AG04449 (cell line): ENCODE measurements at regions of chr17 and their contacts with region 1.

Region 1: DNA sequence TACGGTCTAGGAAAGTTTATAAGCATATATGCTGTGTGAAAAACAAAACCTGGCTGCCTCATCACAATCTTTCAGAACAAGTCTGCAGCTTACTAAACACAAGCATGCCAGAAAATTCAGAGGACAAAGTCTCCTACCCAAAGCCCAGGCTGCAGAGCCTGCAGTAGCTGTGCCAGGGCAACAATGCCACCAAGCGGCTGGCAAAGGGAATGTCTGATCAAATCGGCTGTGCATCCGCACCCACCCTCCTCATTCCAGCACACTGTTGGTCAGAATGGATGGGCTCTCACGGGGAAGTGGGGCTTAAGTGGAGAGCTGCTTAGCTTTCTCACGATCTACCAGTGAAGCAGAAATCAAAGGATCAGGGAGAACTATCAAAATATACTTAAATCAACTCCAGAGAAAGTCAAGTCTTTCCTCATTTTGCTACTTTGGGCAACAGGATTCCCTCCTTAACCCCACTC is 73.5 kb downstream of the CYTH1 start:
- DNase-seq: peak; percentile 57
- H3K4me3 ChIP-seq: no peak overlapping the region
- CTCF ChIP-seq: peak; percentile 95

Region 2: GRCh38 chr17:78484300-78485246 is 224.0 kb before region 1 on chr17:
- CTCF ChIA-PET with region 1: interaction called, 14 read pairs
- POLR2A ChIA-PET with region 1: no interaction called
- DNase-seq: no peak
- H3K4me3 ChIP-seq: peak overlapping the region; percentile 33
- CTCF ChIP-seq: no peak

Region 3: DNA sequence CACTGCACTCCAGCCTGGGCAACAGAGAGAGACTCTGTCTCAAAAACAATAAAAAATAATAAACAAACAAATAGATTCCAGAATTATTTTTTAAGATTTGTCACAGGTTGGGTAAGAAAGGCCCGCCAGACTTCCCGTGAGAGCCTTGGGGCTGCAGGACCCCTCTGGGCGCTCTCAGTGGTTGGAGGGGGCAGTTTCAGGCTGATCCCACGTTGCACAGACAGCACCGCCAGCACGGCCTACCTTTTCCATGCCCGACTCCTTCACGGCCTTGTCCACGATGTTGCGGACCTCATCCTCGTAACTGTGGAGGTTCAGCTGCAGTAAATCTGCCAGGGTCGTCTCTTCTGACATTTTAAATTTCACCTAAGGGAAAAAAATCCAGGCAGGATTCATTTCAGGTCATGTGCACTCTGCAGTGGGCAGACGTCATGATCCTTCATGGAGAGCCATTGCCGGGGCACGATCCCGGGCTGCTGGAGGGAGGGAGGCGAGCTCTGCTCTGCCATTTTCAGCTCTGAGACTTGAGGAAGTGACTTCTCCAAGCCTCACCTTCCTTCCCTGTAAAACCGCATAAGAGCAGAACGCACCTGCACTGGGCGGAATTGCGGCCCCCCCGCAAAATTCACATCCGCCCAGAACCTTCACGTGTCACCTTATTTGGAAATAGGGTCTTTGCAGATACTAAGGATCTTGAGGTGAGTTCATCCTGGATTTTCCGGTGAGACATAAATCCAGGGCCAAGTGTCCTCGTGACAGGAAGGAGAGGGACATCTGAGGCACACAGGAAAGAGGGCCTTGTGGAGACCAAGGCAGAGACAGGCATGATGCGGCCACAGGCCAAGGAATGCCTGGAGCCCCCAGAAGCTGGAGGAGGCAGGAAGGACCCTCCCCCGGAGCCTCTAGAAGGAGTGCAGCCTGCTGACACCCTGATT is 198.1 kb before region 1 on chr17:
- CTCF ChIA-PET with region 1: interaction called, 20 read pairs
- POLR2A ChIA-PET with region 1: no interaction called
- DNase-seq: no peak
- H3K4me3 ChIP-seq: no peak overlapping the region
- CTCF ChIP-seq: no peak

Region 4: DNA sequence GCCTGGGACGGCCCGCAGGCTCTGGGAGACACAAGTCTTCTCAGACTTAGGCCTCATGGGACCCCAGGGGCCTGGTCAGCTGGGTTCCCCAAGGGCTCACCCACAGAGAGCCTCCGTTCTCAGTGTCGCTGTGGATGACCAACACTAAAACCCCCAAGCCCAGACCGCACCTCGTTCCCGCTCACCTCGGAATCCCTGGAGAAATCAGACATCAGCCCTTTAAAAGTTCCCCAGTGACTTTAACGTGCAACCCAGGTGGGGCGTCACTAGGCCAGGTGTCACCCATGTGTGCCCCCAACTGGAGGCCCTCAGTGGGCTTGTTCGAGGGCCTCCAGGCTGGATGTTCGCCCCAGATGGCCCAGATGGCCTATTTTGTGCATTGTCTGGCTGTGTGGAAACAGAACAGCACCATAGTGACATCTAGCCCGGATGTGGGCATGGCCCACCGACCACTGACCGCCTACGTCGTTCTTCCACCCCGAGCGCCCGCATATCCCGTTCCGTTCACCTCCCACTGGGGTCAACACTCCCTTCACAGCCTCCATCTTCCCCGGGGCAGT is 79.0 kb before region 1 on chr17:
- CTCF ChIA-PET with region 1: no interaction called
- POLR2A ChIA-PET with region 1: no interaction called
- DNase-seq: no peak
- H3K4me3 ChIP-seq: no peak overlapping the region
- CTCF ChIP-seq: no peak

Region 5: GRCh38 chr17:78687125-78687524 is 21.4 kb before region 1 on chr17:
- CTCF ChIA-PET with region 1: interaction called, 10 read pairs
- POLR2A ChIA-PET with region 1: interaction called, 3 read pairs
- DNase-seq: no peak
- H3K4me3 ChIP-seq: no peak overlapping the region
- CTCF ChIP-seq: no peak

Region 6: DNA sequence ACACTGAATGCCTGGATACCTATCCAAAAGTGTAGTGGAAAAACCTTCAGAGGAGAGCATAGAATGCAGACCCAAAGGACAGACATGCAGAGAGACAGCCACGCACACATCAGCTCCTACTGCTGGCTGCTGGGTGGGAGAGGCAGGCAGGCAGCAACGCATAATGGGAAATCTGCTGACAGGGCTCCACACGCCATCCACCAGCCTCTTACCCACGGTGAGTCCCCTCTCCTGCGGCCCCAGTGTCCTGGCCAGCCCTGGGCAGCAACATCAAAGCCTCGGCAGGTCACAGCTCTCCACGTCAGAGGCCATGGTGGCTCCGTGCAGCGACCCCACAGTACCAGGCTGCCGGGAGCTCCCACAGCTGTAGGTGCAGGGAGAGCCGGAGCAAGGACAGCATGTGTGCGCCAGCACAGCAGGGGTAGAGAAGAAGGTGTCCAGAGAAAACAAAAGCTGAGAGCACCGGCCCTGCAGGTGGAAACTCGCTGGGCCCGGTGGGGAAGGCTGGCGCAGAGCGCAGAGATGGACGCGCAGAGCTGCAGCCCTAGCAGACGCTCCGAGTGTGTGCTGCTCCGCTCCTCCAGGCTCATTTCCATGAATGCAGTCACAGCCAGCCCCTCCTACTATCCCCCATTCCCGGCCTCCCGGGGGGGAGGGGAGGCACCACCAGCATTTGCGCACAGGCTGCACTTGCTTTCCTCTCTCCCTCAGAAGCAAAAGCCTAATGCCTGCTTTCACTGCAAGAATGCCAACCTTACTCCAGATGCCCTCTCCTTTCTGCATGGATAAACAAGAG is 14.7 kb after region 1 on chr17:
- CTCF ChIA-PET with region 1: interaction called, 63 read pairs
- POLR2A ChIA-PET with region 1: no interaction called
- DNase-seq: no peak
- H3K4me3 ChIP-seq: peak overlapping the region; percentile 42
- CTCF ChIP-seq: no peak

Region 7: GRCh38 chr17:78745407-78746088 is 37.0 kb after region 1 on chr17:
- CTCF ChIA-PET with region 1: interaction called, 68 read pairs
- POLR2A ChIA-PET with region 1: no interaction called
- DNase-seq: no peak
- H3K4me3 ChIP-seq: no peak overlapping the region
- CTCF ChIP-seq: peak; percentile 42

Region 8: DNA sequence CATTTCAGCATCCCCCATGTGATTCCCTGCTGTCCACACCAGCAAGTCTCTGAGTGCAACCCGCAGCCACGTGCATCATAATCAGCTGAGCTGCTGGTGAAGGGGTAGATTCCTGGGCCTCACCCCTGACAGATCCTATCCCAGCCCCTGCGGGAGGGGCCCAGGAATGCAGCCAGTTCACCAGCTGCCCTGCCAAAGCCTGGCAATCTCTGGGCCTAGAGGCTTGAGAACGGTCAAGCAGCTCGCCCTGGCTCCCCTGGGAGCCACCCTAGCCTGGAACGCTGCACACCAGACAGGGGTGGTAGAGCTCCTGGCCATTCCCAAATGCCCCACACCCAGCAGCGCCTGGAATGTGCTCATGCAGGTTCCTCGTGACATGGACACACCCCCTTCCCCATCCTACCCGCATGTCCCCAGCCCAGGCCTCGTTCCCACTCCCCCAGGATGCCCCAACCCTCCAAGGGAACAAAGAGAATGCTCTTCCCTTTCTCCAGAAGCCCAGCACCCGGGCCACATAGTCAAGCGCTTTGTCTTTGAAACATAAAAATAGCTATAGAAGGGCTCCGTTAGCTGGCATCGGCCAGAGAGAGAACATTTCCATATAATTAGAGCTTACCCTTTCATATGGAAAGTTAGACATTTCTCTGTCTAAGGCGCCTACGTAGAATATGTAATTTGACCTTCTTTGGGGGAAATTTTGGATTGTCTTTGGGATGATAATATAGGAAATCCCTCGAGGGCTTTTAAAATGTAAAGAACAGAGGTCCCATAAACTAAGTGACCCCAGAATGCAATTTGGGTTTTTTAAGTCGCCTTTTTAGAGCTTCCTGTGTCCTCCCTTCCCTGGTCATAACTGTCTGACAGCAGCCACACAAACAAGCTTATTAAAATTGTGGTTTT is 191.1 kb after region 1 on chr17:
- CTCF ChIA-PET with region 1: no interaction called
- POLR2A ChIA-PET with region 1: no interaction called
- DNase-seq: no peak
- H3K4me3 ChIP-seq: no peak overlapping the region
- CTCF ChIP-seq: no peak